ENCODE measurements at regions of chr9 and their contacts with region 1.

Region 1: GRCh38 chr9:133149126-133150107 is 14.3 kb downstream of the GBGT1 start:
- DNase-seq: peak; percentile 91
- ATAC-seq: peak; percentile 87

Region 2: DNA sequence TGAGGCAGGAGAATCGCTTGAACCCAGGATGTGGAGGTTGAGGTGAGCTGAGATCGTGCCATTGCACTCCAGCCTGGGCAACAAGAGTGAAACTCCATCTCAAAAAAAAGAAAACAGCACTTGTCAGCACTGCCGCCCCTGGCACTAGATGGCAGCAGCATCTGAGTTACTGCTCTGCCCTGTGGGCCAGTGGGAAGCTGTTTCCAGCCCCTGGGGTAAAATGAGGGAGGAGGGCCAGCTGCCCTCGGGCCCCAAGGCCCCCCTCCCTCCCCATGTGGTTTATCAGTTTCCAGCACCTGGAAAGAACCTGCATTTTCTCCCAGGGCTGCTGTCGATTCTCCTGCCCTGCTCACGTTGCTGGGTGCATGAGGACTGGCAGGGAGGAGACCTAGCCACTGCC is 100.8 kb before region 1 on chr9:
- intact Hi-C with region 1: loop called (anchors 10 kb)
- DNase-seq: no peak
- ATAC-seq: no peak

Region 3: DNA sequence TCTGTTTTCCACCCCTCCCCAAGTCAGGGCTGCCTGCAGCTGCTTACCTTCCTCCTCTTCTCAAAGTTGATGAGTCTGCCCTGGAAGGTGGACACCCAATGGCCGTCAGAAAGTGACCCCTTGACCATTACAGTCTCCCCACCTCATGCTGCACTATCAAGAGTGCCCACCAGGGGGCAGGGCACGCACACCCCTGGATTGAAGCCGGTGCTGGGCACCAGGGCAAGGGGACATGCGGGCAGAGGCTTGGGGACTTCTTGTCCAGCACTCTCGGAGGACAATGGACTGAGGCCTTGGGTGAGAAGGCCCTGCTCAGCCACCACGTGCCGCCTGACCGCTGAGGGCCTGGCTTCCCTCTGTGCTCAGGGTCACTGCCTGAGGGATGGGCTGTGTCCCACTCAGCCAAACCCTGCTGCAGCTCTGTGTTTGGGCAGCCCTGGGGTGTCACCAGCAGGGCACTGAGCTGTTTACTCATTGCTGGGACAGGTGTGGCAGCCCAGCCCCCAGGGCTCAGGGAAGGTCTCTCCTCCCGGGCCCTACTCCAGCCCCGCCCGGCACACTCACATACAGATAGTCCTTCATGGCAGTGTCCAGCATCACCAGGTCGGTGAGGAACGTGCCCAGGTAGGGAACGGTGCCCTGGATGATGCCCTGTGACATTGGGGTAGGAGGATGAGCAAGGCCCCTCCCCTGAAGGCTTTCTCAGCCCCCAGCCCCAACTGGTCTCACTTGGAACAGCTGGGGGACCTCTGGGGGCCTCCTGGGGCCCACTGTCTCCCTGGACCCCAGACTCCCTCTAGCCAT is 46.0 kb before region 1 on chr9:
- intact Hi-C with region 1: loop called (anchors 1 kb)
- DNase-seq: peak; percentile 86
- ATAC-seq: peak; percentile 80

Region 4: DNA sequence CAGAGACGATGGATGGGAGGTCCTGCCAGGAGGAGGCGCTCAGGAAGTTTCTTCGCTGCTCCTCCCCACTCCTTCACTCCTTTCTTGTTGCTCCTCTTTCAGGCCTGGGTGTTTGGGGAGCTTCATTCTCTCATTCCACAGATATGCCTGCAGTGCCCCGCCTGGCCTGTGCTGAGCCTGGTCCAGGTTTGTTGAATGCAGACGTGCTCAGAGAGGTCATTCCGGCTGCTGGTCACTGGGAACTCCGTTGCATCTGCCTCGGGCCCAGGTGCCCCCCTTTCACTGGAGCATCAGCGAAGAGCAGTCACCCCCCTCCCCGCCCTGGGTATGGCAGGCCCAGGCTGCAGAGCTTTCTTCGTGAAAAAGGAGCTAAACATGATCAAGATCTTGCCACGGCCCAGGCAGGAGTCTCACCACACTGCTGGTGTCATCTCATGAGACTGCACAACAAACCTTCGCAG is 171.0 kb after region 1 on chr9:
- intact Hi-C with region 1: no loop called
- DNase-seq: no peak
- ATAC-seq: no peak

Measured in sciatic nerve (tissue), 2 donors.